Heart left ventricle (tissue), 16 donors: ENCODE measurements at regions of chr18 and their contacts with region 1.

Region 1: GRCh38 chr18:32289483-32290075 is 99.7 kb downstream of the MEP1B start:
- DNase-seq: peak in 2 of 5 donors; percentile 33 to 38
- ATAC-seq: peak; percentile 61 to 82 (median 70)
- H3K4me3 ChIP-seq: no peak overlapping the region
- H3K27ac ChIP-seq: no peak overlapping the region
- H3K4me1 ChIP-seq: peaks cover 0 to 3% (median 0%) of the 10 kb centered on the region in 12 donors
- H3K27me3 ChIP-seq: no peaks in the 10 kb centered on the region
- CTCF ChIP-seq: peak; percentile 56 to 73 (median 64)
- POLR2A ChIP-seq: no peak

Region 2: GRCh38 chr18:32349728-32350395 is 60.3 kb after region 1 on chr18:
- intact Hi-C with region 1: loop called in 2 of 10 experiments (anchors 10 kb)
- DNase-seq: peak in 4 of 5 donors; percentile 78 to 84 (median 81)
- ATAC-seq: peak; percentile 45 to 79 (median 63)
- H3K4me3 ChIP-seq: peak overlapping the region in 3 of 12 donors; percentile 7 to 19 (median 19)
- H3K27ac ChIP-seq: peak overlapping the region; percentile 19 to 83 (median 70)
- H3K4me1 ChIP-seq: peaks cover 0 to 46% (median 18%) of the 10 kb centered on the region in 12 donors
- H3K27me3 ChIP-seq: no peaks in the 10 kb centered on the region
- CTCF ChIP-seq: no peak
- POLR2A ChIP-seq: no peak

Region 3: GRCh38 chr18:32439802-32440201 is 150.2 kb after region 1 on chr18:
- intact Hi-C with region 1: loop called in 1 of 10 experiments (anchors 10 kb)
- DNase-seq: peak in 1 of 5 donors; percentile 21
- ATAC-seq: no peak
- H3K4me3 ChIP-seq: no peak overlapping the region
- H3K27ac ChIP-seq: no peak overlapping the region
- H3K4me1 ChIP-seq: peaks cover 0 to 76% (median 21%) of the 10 kb centered on the region in 12 donors
- H3K27me3 ChIP-seq: no peaks in the 10 kb centered on the region
- CTCF ChIP-seq: peak in 4 of 12 donors; percentile 15 to 38 (median 22)
- POLR2A ChIP-seq: no peak

Region 4: DNA sequence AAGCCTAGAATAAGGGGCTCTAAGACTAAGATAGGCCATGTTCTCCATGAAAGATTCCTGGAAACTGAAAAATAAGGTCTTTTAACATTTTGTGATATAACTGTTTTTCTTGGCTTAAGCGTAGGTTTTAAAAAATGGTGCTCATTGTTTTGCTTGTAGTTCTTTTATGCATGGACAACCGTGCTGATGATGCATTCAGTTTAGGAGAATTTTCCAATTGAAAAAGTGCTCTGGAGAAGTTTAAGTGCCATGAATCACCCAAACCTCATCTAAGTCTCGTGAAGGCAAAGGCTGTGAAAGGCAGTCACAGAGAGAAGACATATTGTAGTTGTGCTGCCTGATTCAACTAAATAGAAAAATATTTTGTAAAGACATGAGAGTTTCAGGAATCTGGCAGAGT is 292.9 kb after region 1 on chr18:
- intact Hi-C with region 1: no loop called
- DNase-seq: no peak
- ATAC-seq: no peak
- H3K4me3 ChIP-seq: no peak overlapping the region
- H3K27ac ChIP-seq: no peak overlapping the region
- H3K4me1 ChIP-seq: no peaks in the 10 kb centered on the region
- H3K27me3 ChIP-seq: peaks cover 0 to 12% (median 0%) of the 10 kb centered on the region in 9 donors
- CTCF ChIP-seq: no peak
- POLR2A ChIP-seq: no peak

Region 5: DNA sequence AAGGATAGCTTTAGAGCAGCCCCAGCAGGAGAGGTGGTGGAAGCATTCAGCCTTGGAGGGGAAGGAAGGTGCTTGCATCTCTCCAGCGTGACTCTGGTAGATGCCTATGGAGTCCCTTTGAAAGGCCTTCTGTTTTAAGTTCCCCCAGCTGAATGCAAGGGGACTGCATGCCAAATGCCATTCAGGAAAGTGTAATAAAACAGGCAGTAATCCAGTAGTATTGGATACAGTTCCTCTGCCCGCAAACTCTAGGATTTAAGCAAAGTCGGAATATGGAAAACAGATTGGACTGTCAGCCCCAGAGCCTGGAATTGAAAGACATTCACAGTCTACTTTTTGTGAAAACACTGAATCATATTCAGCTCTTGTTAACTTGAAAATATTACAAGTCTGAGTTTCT is 306.3 kb after region 1 on chr18:
- intact Hi-C with region 1: no loop called
- DNase-seq: no peak
- ATAC-seq: no peak
- H3K4me3 ChIP-seq: no peak overlapping the region
- H3K27ac ChIP-seq: no peak overlapping the region
- H3K4me1 ChIP-seq: no peaks in the 10 kb centered on the region
- H3K27me3 ChIP-seq: no peaks in the 10 kb centered on the region
- CTCF ChIP-seq: no peak
- POLR2A ChIP-seq: no peak